Breast epithelium (tissue), 4 donors: ENCODE measurements at regions of chr3 and their contacts with region 1.

Region 1: GRCh38 chr3:10641760-10642159 is 136.4 kb upstream of the ATP2B2 start:
- DNase-seq: no peak
- H3K4me3 ChIP-seq: no peak overlapping the region
- H3K27ac ChIP-seq: no peak overlapping the region
- H3K4me1 ChIP-seq: no peaks in the 10 kb centered on the region
- H3K27me3 ChIP-seq: no peaks in the 10 kb centered on the region
- CTCF ChIP-seq: no peak
- POLR2A ChIP-seq: no peak

Region 2: DNA sequence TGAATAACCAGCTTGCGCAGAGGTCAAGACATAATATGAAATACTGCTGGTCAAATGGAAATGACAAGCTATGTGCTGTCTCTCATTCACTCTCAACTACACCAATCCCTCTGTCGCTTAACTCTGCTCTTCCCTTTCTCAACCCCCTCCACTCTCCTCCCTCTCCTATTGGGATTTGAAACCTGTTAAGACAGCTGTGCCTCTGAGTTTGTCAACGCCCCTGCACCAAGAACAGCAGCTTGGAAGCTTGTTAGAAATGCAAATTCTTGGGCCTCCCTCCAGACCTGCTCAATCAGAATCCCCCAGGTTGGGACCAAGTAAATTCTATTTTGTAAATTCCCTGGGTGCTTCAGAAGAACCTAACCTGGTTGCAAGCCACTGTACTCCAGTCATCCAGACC is 13.3 kb after region 1 on chr3:
- intact Hi-C with region 1: no loop called
- DNase-seq: no peak
- H3K4me3 ChIP-seq: no peak overlapping the region
- H3K27ac ChIP-seq: no peak overlapping the region
- H3K4me1 ChIP-seq: no peaks in the 10 kb centered on the region
- H3K27me3 ChIP-seq: no peaks in the 10 kb centered on the region
- CTCF ChIP-seq: no peak
- POLR2A ChIP-seq: no peak

Region 3: DNA sequence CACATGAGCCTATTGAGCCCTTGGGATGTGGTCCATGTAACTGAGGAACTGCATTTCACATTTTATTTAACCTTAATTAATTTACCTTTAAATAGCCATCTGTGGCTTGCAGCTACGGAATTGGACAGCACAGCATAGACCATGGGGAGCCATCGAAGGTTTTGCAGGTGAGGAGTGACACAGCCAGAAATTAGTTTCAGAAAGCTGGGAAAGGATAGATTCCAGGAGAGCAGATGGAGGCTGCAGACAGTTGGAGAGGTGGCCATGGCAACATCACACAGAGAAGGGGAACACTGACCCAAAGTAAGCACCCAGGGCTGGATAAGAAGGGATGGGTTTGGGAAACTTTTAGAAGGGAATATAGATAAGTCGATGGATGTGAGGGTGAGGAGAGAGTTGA is 74.1 kb after region 1 on chr3:
- intact Hi-C with region 1: no loop called
- DNase-seq: no peak
- H3K4me3 ChIP-seq: no peak overlapping the region
- H3K27ac ChIP-seq: no peak overlapping the region
- H3K4me1 ChIP-seq: no peaks in the 10 kb centered on the region
- H3K27me3 ChIP-seq: no peaks in the 10 kb centered on the region
- CTCF ChIP-seq: no peak
- POLR2A ChIP-seq: no peak

Region 4: GRCh38 chr3:11010426-11011165 is 368.8 kb after region 1 on chr3:
- intact Hi-C with region 1: loop called (anchors 5 kb)
- DNase-seq: no peak
- H3K4me3 ChIP-seq: no peak overlapping the region
- H3K27ac ChIP-seq: no peak overlapping the region
- H3K4me1 ChIP-seq: no peaks in the 10 kb centered on the region
- H3K27me3 ChIP-seq: peaks cover 0 to 4% of the 10 kb centered on the region in 2 donors
- CTCF ChIP-seq: no peak
- POLR2A ChIP-seq: no peak